ENCODE measurements at regions of chr10 and their contacts with region 1.

Region 1: GRCh38 chr10:3776796-3777571 is 8.0 kb downstream of the KLF6 start:
- DNase-seq: peak in 1 of 2 experiments; percentile 75
- ATAC-seq: 0 out of 6 replicates have a peak, but pooled peaks of 1 of the 2 experiments have one; percentile 30
- H3K4me3 ChIP-seq: no peak overlapping the region
- H3K27ac ChIP-seq: peak overlapping the region; percentile 50 to 67; a peak in 4 of 6 replicates
- H3K4me1 ChIP-seq: peaks cover 72% of the 10 kb centered on the region
- CTCF ChIP-seq: no peak
- EP300 ChIP-seq: peak; percentile 16 to 44; a peak in 2 of 5 replicates
- POLR2A ChIP-seq: no peak
- RAD21 ChIP-seq: peak in 1 of 2 experiments; percentile 34; a peak in 2 of 5 replicates

Region 2: DNA sequence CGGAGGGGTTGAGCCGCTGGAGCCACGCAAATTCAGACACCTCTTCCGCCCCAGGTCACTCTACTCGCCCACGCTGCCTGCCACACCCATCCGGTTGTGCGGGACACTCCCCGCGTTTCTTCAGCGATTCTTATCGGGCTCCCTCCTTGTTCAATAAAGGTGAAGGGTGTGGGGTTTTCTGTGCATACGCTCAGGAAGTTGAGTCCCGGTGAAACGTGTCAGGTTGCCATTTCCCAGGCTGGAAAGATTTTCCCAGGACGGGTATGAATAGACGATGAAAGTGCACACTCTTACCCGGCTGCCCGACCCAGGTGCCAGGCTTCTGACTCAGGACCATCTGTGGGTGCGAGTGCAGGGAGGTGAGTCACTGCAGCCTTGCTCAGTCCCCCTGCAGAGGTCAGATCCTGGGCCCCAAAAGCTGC is 13.9 kb before region 1 on chr10:
- CTCF ChIA-PET with region 1: interaction called, 5 read pairs
- POLR2A ChIA-PET with region 1: interaction called, 13 read pairs
- DNase-seq: peak in 1 of 2 experiments; percentile 53
- ATAC-seq: peak; percentile 78 to 87
- H3K4me3 ChIP-seq: peak overlapping the region; percentile 25
- H3K27ac ChIP-seq: peak overlapping the region; percentile 54 to 80
- H3K4me1 ChIP-seq: peaks cover 51% of the 10 kb centered on the region
- CTCF ChIP-seq: no peak
- EP300 ChIP-seq: no peak
- POLR2A ChIP-seq: no peak
- RAD21 ChIP-seq: 0 out of 5 replicates have a peak, but pooled peaks of 1 of the 2 experiments have one; percentile 13

Region 3: GRCh38 chr10:4101918-4102654 is 325.1 kb after region 1 on chr10:
- CTCF ChIA-PET with region 1: no interaction called
- POLR2A ChIA-PET with region 1: no interaction called
- DNase-seq: no peak
- ATAC-seq: no peak
- H3K4me3 ChIP-seq: no peak overlapping the region
- H3K27ac ChIP-seq: no peak overlapping the region
- H3K4me1 ChIP-seq: no peaks in the 10 kb centered on the region
- CTCF ChIP-seq: no peak
- EP300 ChIP-seq: no peak
- POLR2A ChIP-seq: no peak
- RAD21 ChIP-seq: no peak